Activated CD4-positive, alpha-beta T cell treated with anti-CD3 and anti-CD28 coated beads, Interleukin-2, amount 10 ng/mL, durations not matched to agents 24 days and 14 days (primary cell): ENCODE measurements at regions of chr2 and their contacts with region 1.

Region 1: DNA sequence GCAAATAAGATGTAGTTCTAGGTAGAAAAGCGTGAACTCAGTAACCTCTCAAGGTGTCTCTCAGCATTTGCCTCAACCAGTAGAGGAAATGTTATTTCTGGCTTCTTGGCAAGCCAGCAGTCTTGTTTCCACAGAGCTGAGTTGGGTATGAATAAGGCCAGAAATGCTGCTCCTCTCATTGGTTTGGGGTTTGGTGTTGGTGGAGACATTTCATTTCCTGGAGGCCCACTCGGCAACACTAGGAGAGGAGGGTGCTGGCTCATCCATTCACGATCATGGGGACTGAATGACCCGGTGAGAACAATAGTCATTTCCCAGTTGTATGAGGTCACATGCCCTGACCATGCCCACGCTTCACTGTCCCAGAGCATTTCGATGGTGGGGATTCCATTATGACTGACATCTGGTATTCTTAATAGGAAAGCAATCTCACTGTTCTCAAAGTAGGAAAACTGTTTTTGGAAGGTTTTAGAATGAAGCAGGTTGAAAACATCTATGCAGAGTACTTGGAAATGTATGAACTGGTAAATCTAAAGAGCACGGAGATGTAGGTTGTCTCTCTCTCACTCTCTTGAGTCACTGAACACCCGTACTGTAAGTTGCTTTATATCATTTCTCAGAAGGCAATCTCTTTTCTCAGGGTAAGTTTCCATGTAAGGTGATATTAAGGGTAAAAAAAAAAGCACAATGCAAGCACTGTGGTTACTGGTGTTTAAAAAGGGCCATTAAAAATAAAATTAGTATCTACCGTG is 37.1 kb upstream of the CTLA4 start:
- DNase-seq: peak; percentile 81
- H3K4me3 Mint-ChIP-seq: peak overlapping the region; percentile 53
- H3K27ac Mint-ChIP-seq: peak overlapping the region; percentile 93
- H3K4me1 Mint-ChIP-seq: peaks cover 21% of the 10 kb centered on the region
- H3K27me3 Mint-ChIP-seq: no peaks in the 10 kb centered on the region

Region 2: GRCh38 chr2:203280428-203281064 is 549.9 kb before region 1 on chr2:
- intact Hi-C with region 1: no loop called
- DNase-seq: no peak
- H3K4me3 Mint-ChIP-seq: no peak overlapping the region
- H3K27ac Mint-ChIP-seq: no peak overlapping the region
- H3K4me1 Mint-ChIP-seq: no peaks in the 10 kb centered on the region
- H3K27me3 Mint-ChIP-seq: no peaks in the 10 kb centered on the region

Region 3: GRCh38 chr2:203740780-203741281 is 89.6 kb before region 1 on chr2:
- intact Hi-C with region 1: loop called (anchors 1 kb)
- DNase-seq: peak; percentile 89
- H3K4me3 Mint-ChIP-seq: peak overlapping the region; percentile 69
- H3K27ac Mint-ChIP-seq: peak overlapping the region; percentile 96
- H3K4me1 Mint-ChIP-seq: peaks cover 72% of the 10 kb centered on the region
- H3K27me3 Mint-ChIP-seq: no peaks in the 10 kb centered on the region

Region 4: DNA sequence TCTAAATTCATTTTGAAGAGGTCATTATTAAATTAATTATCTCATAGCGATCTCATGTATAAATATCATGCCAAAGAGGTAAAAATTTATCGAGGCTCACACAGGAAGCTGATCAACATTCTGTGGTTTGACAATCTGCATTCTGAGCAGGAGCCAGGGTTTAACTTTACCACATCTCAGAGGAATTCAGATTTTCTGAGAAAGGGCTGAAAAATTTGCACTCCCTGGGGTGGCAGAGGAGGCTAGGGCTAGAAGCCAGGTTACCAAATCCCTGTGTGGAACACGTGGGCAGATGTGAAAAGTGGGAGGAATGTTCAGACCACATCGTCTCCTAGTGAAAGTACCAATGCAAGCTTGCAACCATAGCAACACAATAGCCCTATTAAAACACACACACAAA is 26.4 kb before region 1 on chr2:
- intact Hi-C with region 1: loop called (anchors 2 kb)
- DNase-seq: peak; percentile 82
- H3K4me3 Mint-ChIP-seq: peak overlapping the region; percentile 40
- H3K27ac Mint-ChIP-seq: peak overlapping the region; percentile 84
- H3K4me1 Mint-ChIP-seq: peaks cover 60% of the 10 kb centered on the region
- H3K27me3 Mint-ChIP-seq: no peaks in the 10 kb centered on the region

Region 5: GRCh38 chr2:203853271-203853670 is 22.8 kb after region 1 on chr2:
- intact Hi-C with region 1: loop called (anchors 1 kb)
- DNase-seq: no peak
- H3K4me3 Mint-ChIP-seq: peak overlapping the region; percentile 70
- H3K27ac Mint-ChIP-seq: peak overlapping the region; percentile 89
- H3K4me1 Mint-ChIP-seq: peaks cover 43% of the 10 kb centered on the region
- H3K27me3 Mint-ChIP-seq: no peaks in the 10 kb centered on the region

Region 6: GRCh38 chr2:203887677-203888076 is 57.2 kb after region 1 on chr2:
- intact Hi-C with region 1: loop called (anchors 1 kb)
- DNase-seq: no peak
- H3K4me3 Mint-ChIP-seq: no peak overlapping the region
- H3K27ac Mint-ChIP-seq: no peak overlapping the region
- H3K4me1 Mint-ChIP-seq: peaks cover 51% of the 10 kb centered on the region
- H3K27me3 Mint-ChIP-seq: no peaks in the 10 kb centered on the region

Region 7: DNA sequence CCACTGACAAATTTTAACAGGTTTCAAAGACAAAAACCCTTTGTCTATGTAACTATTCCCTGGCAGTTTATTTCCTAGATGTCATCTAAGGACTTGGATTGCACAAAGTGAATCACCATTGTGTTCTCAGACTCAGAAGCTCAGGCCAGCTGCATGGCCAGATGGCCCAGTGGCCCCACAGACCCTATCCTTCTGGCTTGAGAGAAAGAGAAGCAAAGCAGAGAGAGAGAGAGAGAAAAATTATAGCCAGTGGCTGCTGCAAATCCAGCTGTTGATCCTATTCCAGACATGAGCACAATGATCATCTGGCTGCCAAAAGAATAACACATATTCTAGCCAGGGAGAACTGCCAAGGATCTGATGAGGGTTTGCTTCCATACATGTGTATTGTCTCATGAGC is 62.9 kb after region 1 on chr2:
- intact Hi-C with region 1: loop called (anchors 1 kb)
- DNase-seq: no peak
- H3K4me3 Mint-ChIP-seq: peak overlapping the region; percentile 21
- H3K27ac Mint-ChIP-seq: peak overlapping the region; percentile 62
- H3K4me1 Mint-ChIP-seq: peaks cover 65% of the 10 kb centered on the region
- H3K27me3 Mint-ChIP-seq: no peaks in the 10 kb centered on the region

Region 8: GRCh38 chr2:203909261-203909967 is 78.9 kb after region 1 on chr2:
- intact Hi-C with region 1: loop called (anchors 1 kb)
- DNase-seq: peak; percentile 83
- H3K4me3 Mint-ChIP-seq: peak overlapping the region; percentile 63
- H3K27ac Mint-ChIP-seq: peak overlapping the region; percentile 76
- H3K4me1 Mint-ChIP-seq: peaks cover 19% of the 10 kb centered on the region
- H3K27me3 Mint-ChIP-seq: peaks cover 7% of the 10 kb centered on the region